ENCODE measurements at regions of chr7 and their contacts with region 1.

Region 1: DNA sequence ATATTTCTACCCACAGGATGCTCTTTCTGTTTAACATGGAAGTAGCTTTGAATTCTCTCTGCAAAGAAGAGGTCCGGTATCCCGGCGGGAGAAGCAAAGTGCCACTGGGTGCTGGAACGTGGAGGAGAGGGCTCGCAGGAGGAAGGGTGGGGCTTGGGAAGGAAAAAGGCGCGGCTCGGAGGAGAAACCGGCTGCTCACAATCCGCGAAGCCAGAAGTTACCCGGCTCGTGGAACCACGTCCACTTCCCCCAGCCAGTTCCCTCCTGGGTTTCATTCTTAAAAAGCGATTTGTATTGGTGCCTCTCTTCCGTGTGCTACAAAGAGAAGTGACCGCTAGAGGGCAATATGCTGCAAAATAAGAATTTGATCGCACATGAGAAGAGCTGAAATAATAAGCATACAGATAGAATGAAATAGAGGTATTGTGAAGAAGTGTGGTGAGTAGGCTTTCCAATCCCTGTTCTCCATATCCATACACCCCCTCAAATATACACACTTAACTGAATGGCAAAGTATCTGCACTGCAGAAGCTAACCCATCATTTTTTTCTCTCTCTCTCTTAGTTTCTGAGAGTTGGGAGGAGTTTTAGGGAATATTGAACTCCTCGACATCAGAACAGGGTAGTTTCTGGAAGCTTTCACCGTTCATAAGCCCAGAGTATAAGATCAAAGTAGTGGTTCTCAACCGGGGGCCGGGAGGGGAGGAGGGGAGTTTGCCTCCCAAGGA is 31.1 kb downstream of the TRIL start:
- DNase-seq: peak; percentile 80 to 92
- H3K4me3 ChIP-seq: no peak overlapping the region
- CTCF ChIP-seq: peak in 1 of 3 donors; percentile 61
- POLR2A ChIP-seq: no peak

Region 2: GRCh38 chr7:28815928-28816373 is 111.1 kb before region 1 on chr7:
- intact Hi-C with region 1: no loop called
- DNase-seq: no peak
- H3K4me3 ChIP-seq: no peak overlapping the region
- CTCF ChIP-seq: no peak
- POLR2A ChIP-seq: no peak

Region 3: DNA sequence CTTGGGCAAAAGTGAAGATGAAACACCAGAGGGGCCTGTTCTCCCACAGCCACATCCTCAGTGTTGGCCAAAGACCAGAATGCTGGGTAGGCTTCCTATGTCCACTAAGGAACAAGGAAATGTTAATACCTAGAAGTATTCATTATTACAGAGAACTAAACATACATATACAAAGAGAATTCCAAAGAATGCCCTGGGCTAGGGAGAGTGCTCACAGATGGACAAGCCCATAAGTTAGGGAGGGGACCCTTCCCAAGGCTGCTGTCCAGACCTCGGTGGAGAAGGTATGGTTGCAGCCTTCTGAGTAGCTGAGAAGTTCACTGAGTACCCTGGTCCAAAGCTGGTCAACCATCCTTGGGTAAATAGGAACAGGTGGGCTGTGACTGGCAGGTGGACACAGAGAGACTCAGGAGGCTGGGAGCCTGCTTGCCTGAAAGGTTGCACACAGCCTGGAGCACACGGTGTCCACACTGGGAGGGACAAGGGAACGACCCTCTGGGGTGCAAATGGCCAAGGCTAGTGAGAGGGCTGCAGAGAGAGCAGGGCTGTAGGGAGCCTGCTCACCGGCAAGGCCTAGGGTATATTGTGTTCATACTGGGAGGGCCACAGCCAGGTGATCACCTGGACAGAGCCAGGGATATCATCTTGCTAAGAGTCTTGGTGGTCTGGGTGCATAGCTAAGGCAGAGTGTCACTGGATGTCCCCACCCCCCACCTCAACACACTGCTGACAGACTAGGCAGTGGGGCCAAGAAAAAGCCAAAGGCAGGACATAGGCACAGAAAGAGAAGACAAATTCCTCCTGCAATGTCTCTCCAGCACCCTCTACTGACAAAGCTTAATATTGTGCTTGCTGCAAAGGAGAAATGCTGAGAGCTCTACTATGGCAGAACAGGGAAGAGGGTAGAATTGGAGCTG is 179.0 kb after region 1 on chr7:
- intact Hi-C with region 1: loop called (anchors 2 kb)
- DNase-seq: peak in 1 of 2 donors; percentile 42
- H3K4me3 ChIP-seq: no peak overlapping the region
- CTCF ChIP-seq: peak in 1 of 3 donors; percentile 49
- POLR2A ChIP-seq: no peak